Natural killer cell (primary cell): ENCODE measurements at regions of chr6 and their contacts with region 1.

Region 1: GRCh38 chr6:158649289-158650143 is at the start of gene SYTL3:
- DNase-seq: peak; percentile 62 to 95
- ATAC-seq: peak; percentile 47 to 73 (median 60)
- H3K4me3 ChIP-seq: peak within 1 kb of the TSS; percentile 41
- H3K4me3 Mint-ChIP-seq: peak within 1 kb of the TSS; percentile 87
- H3K27ac ChIP-seq: peak within 1 kb of the TSS; percentile 84
- H3K27ac Mint-ChIP-seq: peak within 1 kb of the TSS; percentile 96 to 99
- H3K4me1 ChIP-seq: peaks cover 66% of the 10 kb centered on the region
- H3K4me1 Mint-ChIP-seq: peaks cover 57 to 62% of the 10 kb centered on the region in 2 donors
- H3K27me3 ChIP-seq: no peaks in the 10 kb centered on the region
- H3K27me3 Mint-ChIP-seq: no peaks in the 10 kb centered on the region
- CTCF ChIP-seq: no peak
- total RNA-seq, gene SYTL3: 84.1 to 143 (median 89.0) TPM

Region 2: GRCh38 chr6:158565482-158566040 is 84.0 kb before region 1 on chr6:
- intact Hi-C with region 1: loop called (anchors 5 kb)
- DNase-seq: no peak
- ATAC-seq: no peak
- H3K4me3 ChIP-seq: peak overlapping the region; percentile 4
- H3K4me3 Mint-ChIP-seq: peak overlapping the region; percentile 89
- H3K27ac ChIP-seq: peak overlapping the region; percentile 75
- H3K27ac Mint-ChIP-seq: peak overlapping the region; percentile 88 to 96
- H3K4me1 ChIP-seq: peaks cover 100% of the 10 kb centered on the region
- H3K4me1 Mint-ChIP-seq: peaks cover 95 to 98% of the 10 kb centered on the region in 2 donors
- H3K27me3 ChIP-seq: no peaks in the 10 kb centered on the region
- H3K27me3 Mint-ChIP-seq: no peaks in the 10 kb centered on the region
- CTCF ChIP-seq: no peak

Region 3: DNA sequence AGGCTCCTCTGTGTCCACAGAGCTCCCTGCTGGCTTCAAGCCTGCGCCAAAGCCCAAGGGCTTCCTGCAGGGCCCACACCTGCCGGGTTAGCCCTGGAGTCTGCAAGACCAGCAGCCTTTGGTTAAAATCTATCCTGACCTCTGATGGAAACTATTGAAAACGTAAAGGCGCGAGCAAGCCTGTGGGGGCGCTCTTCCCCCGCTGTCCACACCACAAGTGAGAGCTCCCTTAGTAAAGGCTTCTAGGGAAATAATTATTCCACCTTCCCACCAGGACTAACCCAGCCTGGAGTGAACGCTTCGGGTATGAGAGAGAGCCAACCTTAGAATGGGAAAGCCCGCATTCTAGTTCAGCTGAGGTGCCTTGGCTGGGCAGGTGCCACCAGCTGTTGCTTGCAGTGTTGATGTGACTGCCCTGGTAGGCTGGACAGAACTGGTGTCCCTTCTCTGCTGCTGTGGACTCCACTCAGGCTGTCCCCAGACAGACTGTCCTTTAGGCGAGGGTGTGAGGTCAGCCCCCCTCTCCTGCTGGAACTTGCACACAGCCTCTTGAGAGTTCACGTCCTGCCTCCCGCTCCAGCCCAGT is 69.0 kb after region 1 on chr6:
- intact Hi-C with region 1: loop called (anchors 1 kb)
- DNase-seq: peak in 1 of 2 donors; percentile 31
- ATAC-seq: no peak
- H3K4me3 ChIP-seq: no peak overlapping the region
- H3K4me3 Mint-ChIP-seq: peak overlapping the region; percentile 86
- H3K27ac ChIP-seq: peak overlapping the region; percentile 95
- H3K27ac Mint-ChIP-seq: peak overlapping the region; percentile 92 to 98
- H3K4me1 ChIP-seq: peaks cover 78% of the 10 kb centered on the region
- H3K4me1 Mint-ChIP-seq: peaks cover 74 to 76% of the 10 kb centered on the region in 2 donors
- H3K27me3 ChIP-seq: no peaks in the 10 kb centered on the region
- H3K27me3 Mint-ChIP-seq: no peaks in the 10 kb centered on the region
- CTCF ChIP-seq: no peak

Region 4: GRCh38 chr6:158784505-158784904 is 135.0 kb after region 1 on chr6:
- intact Hi-C with region 1: no loop called
- DNase-seq: no peak
- ATAC-seq: no peak
- H3K4me3 ChIP-seq: no peak overlapping the region
- H3K4me3 Mint-ChIP-seq: no peak overlapping the region
- H3K27ac ChIP-seq: no peak overlapping the region
- H3K27ac Mint-ChIP-seq: peak overlapping the region in 1 of 2 donors; percentile 8
- H3K4me1 ChIP-seq: peaks cover 8% of the 10 kb centered on the region
- H3K4me1 Mint-ChIP-seq: peaks cover 13 to 15% of the 10 kb centered on the region in 2 donors
- H3K27me3 ChIP-seq: no peaks in the 10 kb centered on the region
- H3K27me3 Mint-ChIP-seq: no peaks in the 10 kb centered on the region
- CTCF ChIP-seq: no peak

Region 5: DNA sequence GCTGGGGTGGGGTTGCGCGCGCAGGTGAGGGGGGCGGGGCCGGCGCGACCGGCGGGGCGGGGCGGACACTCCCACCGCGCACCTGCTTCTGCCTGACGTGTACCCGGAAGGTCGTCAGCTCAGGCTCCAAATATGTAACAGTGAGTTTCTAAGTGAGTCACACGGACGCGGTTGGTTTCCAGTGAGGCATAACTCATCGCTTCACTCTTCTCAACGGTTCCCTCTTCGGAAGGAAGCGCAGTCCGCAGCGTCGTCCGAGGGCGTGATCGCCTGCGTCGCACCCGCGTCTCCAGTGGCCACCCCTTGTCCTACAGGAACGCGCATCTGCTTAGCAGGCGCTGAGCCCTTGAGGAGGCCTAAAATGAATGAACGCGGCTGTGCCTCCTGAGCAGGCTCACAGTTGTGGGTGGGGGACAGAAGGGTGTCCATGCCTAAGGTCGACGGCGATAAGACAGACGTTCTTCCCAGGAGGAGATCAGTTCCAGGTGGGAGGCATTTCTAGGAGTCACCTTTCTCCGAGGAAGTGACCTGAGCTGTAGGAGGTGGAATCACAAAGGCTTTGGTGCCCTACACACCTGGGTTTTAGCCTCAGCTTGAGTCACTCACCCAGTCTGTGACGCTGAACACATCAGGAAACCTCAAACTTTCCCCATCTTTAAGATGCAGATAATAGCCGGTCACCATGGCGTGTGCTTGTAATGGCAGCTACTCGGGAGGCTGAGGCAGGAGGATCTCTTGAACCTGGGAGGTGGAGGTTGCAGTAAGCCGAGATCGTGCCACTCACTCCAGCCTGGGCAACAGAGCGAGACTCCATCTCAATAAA is 220.5 kb after region 1 on chr6:
- intact Hi-C with region 1: loop called (anchors 5 kb)
- DNase-seq: peak; percentile 83 to 98
- ATAC-seq: peak; percentile 73 to 91 (median 80)
- H3K4me3 ChIP-seq: peak overlapping the region; percentile 47
- H3K4me3 Mint-ChIP-seq: peak overlapping the region; percentile 92
- H3K27ac ChIP-seq: peak overlapping the region; percentile 90
- H3K27ac Mint-ChIP-seq: peak overlapping the region; percentile 98 to 100
- H3K4me1 ChIP-seq: peaks cover 30% of the 10 kb centered on the region
- H3K4me1 Mint-ChIP-seq: peaks cover 34 to 39% of the 10 kb centered on the region in 2 donors
- H3K27me3 ChIP-seq: no peaks in the 10 kb centered on the region
- H3K27me3 Mint-ChIP-seq: peaks cover 2 to 7% of the 10 kb centered on the region in 2 donors
- CTCF ChIP-seq: no peak